ENCODE measurements at regions of chr11 and their contacts with region 1.

Region 1: DNA sequence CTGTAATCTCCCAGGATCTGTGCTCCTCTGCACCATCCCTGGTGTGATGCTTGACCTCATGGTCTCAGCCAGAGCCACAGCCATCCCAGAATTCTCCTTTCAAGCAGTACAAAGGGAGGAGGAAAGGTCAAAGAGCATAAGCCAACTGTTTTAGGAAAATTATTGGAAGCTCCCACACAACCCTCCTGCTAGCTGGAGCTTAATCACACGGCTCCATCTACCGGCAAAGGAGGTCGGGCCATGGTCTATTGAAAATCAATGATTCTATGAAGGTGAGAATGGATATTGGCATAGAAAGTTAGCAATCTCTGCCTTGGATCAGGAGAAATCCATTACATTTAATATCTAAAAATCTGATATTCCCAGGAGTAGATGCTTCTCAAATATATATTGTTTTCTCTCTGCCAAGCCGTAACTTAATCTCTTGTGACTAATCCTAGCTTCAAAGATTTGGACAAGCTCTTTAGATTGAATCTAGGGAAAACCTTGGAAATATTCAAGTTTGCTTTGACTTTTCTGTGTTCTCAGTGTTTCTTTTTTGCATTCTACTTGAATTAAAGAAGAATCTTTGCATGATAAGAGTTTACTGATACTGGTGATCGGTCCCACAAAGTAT is 259.6 kb downstream of the NTM start:
- DNase-seq: no peak
- ATAC-seq: no peak
- H3K4me3 ChIP-seq: no peak overlapping the region
- H3K27ac ChIP-seq: no peak overlapping the region
- H3K4me1 ChIP-seq: no peaks in the 10 kb centered on the region
- H3K27me3 ChIP-seq: peaks cover 0 to 3% (median 0%) of the 10 kb centered on the region in 3 donors
- CTCF ChIP-seq: no peak
- POLR2A ChIP-seq: no peak

Region 2: DNA sequence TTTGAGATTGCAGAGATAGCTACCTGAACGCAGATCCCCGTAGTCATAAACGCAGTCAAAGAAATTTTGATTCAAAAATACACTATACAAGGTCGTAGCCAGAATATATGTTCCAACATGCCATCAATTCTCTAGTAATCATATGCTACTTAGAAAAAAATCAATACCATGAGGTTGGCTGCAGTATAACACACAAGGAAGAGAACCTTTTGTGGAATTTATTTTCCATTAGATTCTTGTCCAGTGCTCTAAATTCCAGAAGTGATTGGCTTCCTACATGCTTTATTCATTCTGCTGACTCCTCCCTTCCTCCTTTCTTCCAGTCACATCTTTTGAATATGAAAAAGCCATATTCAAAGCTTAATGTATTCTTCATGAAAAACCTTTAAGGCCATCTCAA is 69.7 kb before region 1 on chr11:
- in situ Hi-C with region 1: no loop called
- intact Hi-C with region 1: no loop called
- DNase-seq: no peak
- ATAC-seq: no peak
- H3K4me3 ChIP-seq: no peak overlapping the region
- H3K27ac ChIP-seq: no peak overlapping the region
- H3K4me1 ChIP-seq: no peaks in the 10 kb centered on the region
- H3K27me3 ChIP-seq: no peaks in the 10 kb centered on the region
- CTCF ChIP-seq: no peak
- POLR2A ChIP-seq: no peak

Region 3: DNA sequence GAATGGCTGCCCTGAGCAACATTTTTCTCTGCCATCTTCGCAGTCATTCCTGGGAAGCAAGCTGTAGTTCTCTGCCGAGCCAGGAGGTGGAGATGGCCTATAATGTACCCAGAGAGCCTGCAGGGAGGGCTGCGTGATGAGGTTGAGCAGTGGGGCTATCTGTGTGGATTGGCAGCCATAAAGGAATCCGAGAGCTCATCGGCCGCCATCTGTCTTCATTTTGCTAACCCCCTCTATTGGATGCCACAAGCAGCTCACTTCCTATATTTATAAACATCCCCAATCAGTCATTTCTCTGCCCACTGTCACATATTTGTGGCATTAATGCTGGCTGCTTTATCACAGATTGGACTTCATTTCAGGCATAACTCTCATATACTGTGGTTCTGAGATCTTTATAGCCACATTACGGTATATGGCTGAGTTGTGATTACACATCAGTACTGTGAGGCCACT is 50.1 kb before region 1 on chr11:
- in situ Hi-C with region 1: no loop called
- intact Hi-C with region 1: no loop called
- DNase-seq: no peak
- ATAC-seq: no peak
- H3K4me3 ChIP-seq: no peak overlapping the region
- H3K27ac ChIP-seq: no peak overlapping the region
- H3K4me1 ChIP-seq: no peaks in the 10 kb centered on the region
- H3K27me3 ChIP-seq: peaks cover 0 to 4% (median 0%) of the 10 kb centered on the region in 3 donors
- CTCF ChIP-seq: peak in 1 of 5 experiments; percentile 21
- POLR2A ChIP-seq: no peak

Region 4: DNA sequence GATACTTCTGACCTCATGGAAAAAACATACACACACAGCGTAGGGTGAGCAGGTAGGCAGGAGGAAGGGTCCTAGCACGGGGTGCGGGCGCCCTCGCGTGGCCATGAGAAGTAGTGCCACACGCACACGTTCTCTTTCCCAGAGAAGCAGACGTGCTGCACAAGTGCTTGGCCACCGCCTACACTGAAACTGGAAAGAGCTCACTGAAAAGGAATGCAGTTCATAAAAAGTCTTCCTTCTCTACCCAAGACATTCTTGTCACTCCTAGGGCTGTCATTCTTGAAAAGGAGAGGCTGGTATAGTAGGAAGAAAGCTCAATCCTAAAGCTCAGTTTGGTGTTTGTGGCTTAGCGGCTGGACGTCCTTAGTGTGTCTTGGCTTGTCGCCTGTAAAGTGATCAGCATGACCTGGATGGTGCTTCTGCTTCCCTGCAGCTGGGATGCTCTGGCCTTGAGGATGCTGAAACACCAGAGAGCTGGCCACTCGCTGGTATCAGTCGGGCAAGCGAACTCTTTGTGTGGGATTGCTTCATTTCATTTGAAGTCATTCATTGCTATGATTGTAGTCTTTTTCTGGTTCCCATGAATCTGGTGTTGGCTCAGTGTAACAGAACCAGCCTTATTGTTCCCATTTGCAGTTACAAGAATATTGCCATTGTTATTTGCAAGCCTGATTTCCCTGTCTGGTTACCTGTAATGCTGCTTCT is 44.2 kb after region 1 on chr11:
- in situ Hi-C with region 1: no loop called
- intact Hi-C with region 1: no loop called
- DNase-seq: peak; percentile 20 to 40
- ATAC-seq: peak; percentile 60 to 66
- H3K4me3 ChIP-seq: no peak overlapping the region
- H3K27ac ChIP-seq: no peak overlapping the region
- H3K4me1 ChIP-seq: no peaks in the 10 kb centered on the region
- H3K27me3 ChIP-seq: no peaks in the 10 kb centered on the region
- CTCF ChIP-seq: peak; percentile 42 to 86 (median 70)
- POLR2A ChIP-seq: no peak

Region 5: DNA sequence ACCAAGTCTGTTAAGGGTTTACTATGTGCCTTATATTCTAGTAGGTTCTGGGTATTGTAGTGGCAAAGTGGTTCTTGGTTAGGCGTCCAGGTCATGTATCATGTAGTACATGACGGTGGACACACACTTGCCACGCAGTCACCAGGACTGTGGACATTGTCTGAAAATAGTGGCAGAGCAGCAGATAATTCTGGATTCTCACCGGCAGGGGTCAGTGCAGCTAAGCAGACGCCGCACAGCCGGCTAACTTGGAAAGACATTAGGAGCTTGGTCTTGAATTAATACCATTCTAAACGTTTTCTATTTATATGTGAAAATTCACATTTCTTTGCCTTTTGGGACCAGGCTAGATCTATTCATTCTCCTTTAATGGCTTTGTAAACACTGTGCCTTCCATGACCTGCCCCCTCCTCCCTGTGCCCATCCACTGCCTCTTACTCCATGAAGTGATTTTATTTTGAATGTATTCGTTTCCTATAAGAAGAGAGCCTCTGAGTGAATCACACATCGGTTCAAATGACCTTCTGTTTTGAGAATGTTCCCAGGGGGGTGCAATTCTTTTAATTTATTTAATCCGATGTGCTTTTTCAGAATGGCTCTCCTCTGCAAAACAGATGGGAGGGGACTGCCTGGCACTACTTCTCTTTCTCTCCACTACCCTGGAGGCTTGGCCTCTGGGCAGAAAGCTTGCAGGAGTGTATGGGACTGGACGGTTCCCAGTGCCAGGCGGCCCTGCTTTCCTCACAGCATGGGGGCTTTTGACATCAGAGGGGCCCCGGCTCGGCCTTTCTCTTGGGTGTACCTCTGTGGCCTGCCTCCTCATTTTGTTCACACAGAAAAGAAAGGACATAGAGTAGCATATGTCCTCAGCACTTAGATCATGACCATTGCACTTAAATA is 118.4 kb after region 1 on chr11:
- in situ Hi-C with region 1: loop called in 1 of 4 experiments (anchors 25 kb)
- intact Hi-C with region 1: no loop called
- DNase-seq: peak; percentile 5 to 14
- ATAC-seq: peak in 1 of 2 donors; percentile 39
- H3K4me3 ChIP-seq: no peak overlapping the region
- H3K27ac ChIP-seq: no peak overlapping the region
- H3K4me1 ChIP-seq: no peaks in the 10 kb centered on the region
- H3K27me3 ChIP-seq: no peaks in the 10 kb centered on the region
- CTCF ChIP-seq: peak in 4 of 5 experiments; percentile 20 to 59 (median 42)
- POLR2A ChIP-seq: no peak